Vagina (tissue), 2 donors: ENCODE measurements at regions of chr3 and their contacts with region 1.

Region 1: DNA sequence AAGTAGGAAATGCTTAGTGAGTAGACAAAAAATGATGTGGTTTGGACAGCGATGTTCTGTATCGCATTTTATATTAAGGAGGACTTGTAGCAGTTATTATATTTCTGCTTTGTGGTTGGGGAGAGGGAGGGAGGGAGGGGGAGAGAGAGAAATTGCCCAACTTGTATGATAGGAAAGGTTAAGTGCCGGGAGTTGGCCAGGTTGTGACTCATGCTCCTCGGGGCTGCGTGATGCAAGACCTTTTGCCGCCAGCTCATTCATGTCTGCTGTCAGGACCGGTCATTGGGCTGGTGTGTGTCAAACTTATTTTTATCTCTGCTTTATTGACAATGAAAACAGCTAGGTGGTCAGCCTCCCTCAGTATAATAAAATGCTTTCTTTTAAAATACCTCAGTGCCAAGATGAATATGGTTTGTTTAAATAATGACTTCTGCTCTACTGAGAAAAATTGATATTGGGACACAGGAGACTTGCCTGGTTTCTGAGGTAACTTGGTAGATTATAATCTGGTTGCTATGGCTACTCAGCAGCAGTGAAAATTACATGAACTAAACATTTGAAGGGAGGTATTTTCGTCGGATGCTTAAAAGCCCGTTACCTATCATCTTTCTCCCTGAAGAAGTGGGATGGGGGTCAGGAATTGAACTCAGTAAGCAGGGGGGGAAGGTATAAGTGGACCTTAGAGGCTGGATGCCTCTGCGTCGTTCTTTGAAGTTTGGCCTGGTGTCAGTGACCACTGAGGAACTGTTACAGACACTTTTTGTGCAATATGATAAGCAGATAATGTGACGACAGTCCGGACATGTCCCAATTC is 90.7 kb downstream of the FNDC3B start:
- DNase-seq: peak in 1 of 2 donors; percentile 98
- H3K4me3 ChIP-seq: no peak overlapping the region
- H3K27ac ChIP-seq: peak overlapping the region; percentile 60
- H3K4me1 ChIP-seq: peaks cover 69% of the 10 kb centered on the region
- H3K27me3 ChIP-seq: no peaks in the 10 kb centered on the region
- CTCF ChIP-seq: no peak
- POLR2A ChIP-seq: no peak

Region 2: DNA sequence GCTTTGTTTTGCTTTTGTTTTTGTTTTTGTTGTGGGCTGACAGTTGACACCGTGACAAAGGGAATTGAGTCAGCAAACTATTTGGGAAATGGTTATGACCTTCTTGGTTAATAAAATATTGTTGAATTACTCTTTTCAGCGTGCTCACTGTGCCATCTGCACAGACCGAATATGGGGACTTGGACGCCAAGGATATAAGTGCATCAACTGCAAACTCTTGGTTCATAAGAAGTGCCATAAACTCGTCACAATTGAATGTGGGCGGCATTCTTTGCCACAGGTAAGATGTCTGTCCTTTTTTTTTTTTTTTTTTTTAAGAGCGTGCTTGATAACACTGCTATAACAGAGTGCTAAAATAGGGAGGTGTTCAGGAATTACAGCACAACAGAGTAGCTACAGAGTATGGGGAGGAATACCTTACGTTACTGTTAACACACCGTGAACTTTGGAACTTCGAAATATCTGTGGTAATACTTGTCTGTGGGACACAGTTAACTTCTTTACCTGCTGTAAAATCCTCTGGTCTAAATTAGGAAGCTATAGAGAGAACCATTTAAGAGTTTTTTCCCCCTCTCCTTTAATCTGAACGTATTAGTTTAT is 1859.7 kb before region 1 on chr3:
- intact Hi-C with region 1: no loop called
- DNase-seq: no peak
- H3K4me3 ChIP-seq: no peak overlapping the region
- H3K27ac ChIP-seq: no peak overlapping the region
- H3K4me1 ChIP-seq: no peaks in the 10 kb centered on the region
- H3K27me3 ChIP-seq: no peaks in the 10 kb centered on the region
- CTCF ChIP-seq: no peak
- POLR2A ChIP-seq: no peak

Region 3: GRCh38 chr3:172082269-172082668 is 47.8 kb before region 1 on chr3:
- intact Hi-C with region 1: no loop called
- DNase-seq: peak in 1 of 2 donors; percentile 89
- H3K4me3 ChIP-seq: no peak overlapping the region
- H3K27ac ChIP-seq: peak overlapping the region; percentile 75
- H3K4me1 ChIP-seq: peaks cover 45% of the 10 kb centered on the region
- H3K27me3 ChIP-seq: no peaks in the 10 kb centered on the region
- CTCF ChIP-seq: no peak
- POLR2A ChIP-seq: no peak

Region 4: DNA sequence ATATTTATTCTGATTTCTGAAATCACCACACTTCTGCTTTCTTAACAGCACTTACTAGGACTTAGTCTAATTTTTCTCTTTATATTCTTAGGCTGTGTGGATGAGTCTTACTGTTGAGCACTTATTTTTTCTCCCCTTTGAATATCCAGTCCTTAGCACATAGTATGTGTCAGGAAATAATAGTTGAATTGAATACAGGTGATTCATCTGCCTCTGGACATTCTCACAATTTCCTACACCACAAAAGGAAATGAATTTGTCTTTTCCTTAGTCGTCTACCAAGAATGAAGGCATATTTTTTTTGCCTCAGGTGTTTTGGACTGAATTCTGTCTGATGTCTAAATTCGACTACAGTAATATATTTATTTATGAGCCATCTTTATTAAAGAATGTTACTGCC is 113.9 kb after region 1 on chr3:
- intact Hi-C with region 1: no loop called
- DNase-seq: no peak
- H3K4me3 ChIP-seq: no peak overlapping the region
- H3K27ac ChIP-seq: no peak overlapping the region
- H3K4me1 ChIP-seq: peaks cover 26% of the 10 kb centered on the region
- H3K27me3 ChIP-seq: no peaks in the 10 kb centered on the region
- CTCF ChIP-seq: no peak
- POLR2A ChIP-seq: no peak

Region 5: GRCh38 chr3:172260481-172260780 is 130.4 kb after region 1 on chr3:
- intact Hi-C with region 1: loop called (anchors 10 kb)
- DNase-seq: no peak
- H3K4me3 ChIP-seq: no peak overlapping the region
- H3K27ac ChIP-seq: peak overlapping the region; percentile 79
- H3K4me1 ChIP-seq: peaks cover 34% of the 10 kb centered on the region
- H3K27me3 ChIP-seq: no peaks in the 10 kb centered on the region
- CTCF ChIP-seq: no peak
- POLR2A ChIP-seq: no peak